ENCODE measurements at regions of chr18 and their contacts with region 1.

Region 1: GRCh38 chr18:51197661-51198424 is at the start of gene MEX3C:
- DNase-seq: peak; percentile 97 to 99 (median 99)
- ATAC-seq: peak; percentile 90
- H3K4me3 ChIP-seq: peak within 1 kb of the TSS; percentile 71
- H3K4me3 Mint-ChIP-seq: peak within 1 kb of the TSS; percentile 83 to 99 (median 97)
- H3K27ac ChIP-seq: peak within 1 kb of the TSS; percentile 80
- H3K27ac Mint-ChIP-seq: peak within 1 kb of the TSS; percentile 92 to 99 (median 97)
- H3K4me1 ChIP-seq: peaks cover 17% of the 10 kb centered on the region in 2 donors
- H3K4me1 Mint-ChIP-seq: peaks cover 20 to 35% (median 31%) of the 10 kb centered on the region in 7 donors
- H3K27me3 ChIP-seq: no peaks in the 10 kb centered on the region
- H3K27me3 Mint-ChIP-seq: no peaks in the 10 kb centered on the region
- total RNA-seq, gene MEX3C: 47.1 to 68.8 (median 53.7) TPM

Region 2: GRCh38 chr18:49486953-49487710 is 1710.7 kb before region 1 on chr18 and contains the start of gene C18orf32:
- CTCF ChIA-PET with region 1: no interaction called
- POLR2A ChIA-PET with region 1: no interaction called
- intact Hi-C with region 1: loop called in 1 of 2 experiments (anchors 5 kb)
- DNase-seq: peak; percentile 84 to 93 (median 92)
- ATAC-seq: peak; percentile 94
- H3K4me3 ChIP-seq: peak within 1 kb of the TSS; percentile 95
- H3K4me3 Mint-ChIP-seq: peak within 1 kb of the TSS; percentile 77 to 98 (median 94)
- H3K27ac ChIP-seq: peak within 1 kb of the TSS; percentile 95
- H3K27ac Mint-ChIP-seq: peak within 1 kb of the TSS; percentile 90 to 98 (median 96)
- H3K4me1 ChIP-seq: peaks cover 34 to 39% of the 10 kb centered on the region in 2 donors
- H3K4me1 Mint-ChIP-seq: peaks cover 40 to 83% (median 70%) of the 10 kb centered on the region in 7 donors
- H3K27me3 ChIP-seq: no peaks in the 10 kb centered on the region
- H3K27me3 Mint-ChIP-seq: no peaks in the 10 kb centered on the region
- total RNA-seq, gene C18orf32: 22.5 to 53.6 (median 31.5) TPM

Region 3: DNA sequence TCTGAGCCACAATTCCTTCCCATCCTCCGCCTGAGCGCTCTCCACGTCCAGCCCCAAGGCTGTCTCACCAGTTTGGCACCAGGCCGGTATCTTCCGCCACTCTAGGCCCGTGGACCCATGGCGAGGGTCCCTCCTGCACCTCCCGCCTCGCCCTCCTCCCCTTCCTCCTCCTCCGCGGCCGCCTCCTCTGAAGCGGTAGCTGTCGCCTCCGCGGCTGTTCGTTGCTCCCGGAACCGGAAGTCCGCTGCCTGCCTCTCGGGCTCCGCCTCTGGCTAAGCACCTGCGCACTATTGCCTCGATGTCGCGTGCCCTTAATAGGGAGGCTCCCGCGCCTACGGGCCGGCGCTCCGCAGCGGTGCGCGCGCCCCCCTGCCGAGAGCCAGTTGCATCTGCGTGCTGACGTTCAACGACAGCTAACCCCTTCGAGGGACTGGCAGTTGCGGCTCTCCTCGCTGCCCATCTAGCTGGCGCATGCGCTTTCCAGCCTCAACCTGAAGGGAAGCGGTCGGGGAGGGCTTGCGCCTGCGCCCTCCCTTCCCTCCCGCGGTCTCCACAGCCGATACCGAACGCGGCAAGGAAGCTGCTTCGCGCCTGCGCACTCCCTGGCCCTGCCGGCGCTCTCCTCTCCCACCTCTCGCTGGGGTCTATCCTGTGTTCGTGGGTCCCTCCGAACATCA is 916.4 kb before region 1 on chr18 and contains the start of gene MBD1:
- CTCF ChIA-PET with region 1: no interaction called
- POLR2A ChIA-PET with region 1: interaction called, 3 read pairs
- intact Hi-C with region 1: loop called in 1 of 2 experiments (anchors 2 kb)
- DNase-seq: peak; percentile 90 to 99 (median 97)
- ATAC-seq: peak; percentile 94
- H3K4me3 ChIP-seq: peak within 1 kb of the TSS; percentile 94
- H3K4me3 Mint-ChIP-seq: peak within 1 kb of the TSS; percentile 90 to 99 (median 97)
- H3K27ac ChIP-seq: peak within 1 kb of the TSS; percentile 88
- H3K27ac Mint-ChIP-seq: peak within 1 kb of the TSS; percentile 93 to 99 (median 97)
- H3K4me1 ChIP-seq: peaks cover 21 to 33% of the 10 kb centered on the region in 2 donors
- H3K4me1 Mint-ChIP-seq: peaks cover 24 to 53% (median 45%) of the 10 kb centered on the region in 7 donors
- H3K27me3 ChIP-seq: no peaks in the 10 kb centered on the region
- H3K27me3 Mint-ChIP-seq: peaks cover 0 to 2% (median 0%) of the 10 kb centered on the region in 5 donors
- total RNA-seq, gene MBD1: 97.5 to 158 (median 118) TPM

Region 4: DNA sequence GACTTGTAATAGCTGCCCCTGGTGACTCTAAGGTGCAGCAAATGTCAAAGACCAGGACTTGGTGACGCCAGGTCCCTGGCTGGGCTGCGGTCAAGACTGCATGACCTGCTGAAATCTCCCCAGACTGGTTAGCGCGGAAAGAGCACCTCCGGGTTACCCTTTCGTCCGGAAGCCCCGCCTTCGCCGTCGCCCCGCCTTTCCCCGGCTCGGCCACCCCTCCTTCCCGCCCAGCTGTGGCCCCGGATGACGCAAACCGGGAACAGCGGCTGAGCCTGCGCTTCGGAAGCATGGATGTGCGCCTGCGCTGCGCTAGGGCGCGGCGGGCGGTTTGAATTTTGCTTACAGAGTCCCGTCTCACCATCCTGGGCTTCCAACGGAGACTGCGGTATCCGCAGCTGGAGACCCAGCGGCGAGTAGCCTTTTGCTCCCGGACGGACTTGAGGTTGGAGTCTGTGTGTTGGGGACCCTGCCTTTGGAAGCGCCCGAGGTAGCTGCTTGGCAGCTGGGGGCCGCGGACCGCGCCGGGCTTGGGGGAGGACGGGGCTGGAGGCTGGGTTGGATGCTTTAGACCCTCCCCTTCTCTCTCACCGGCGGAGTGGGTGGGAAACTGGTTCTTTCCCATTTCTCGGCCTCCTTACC is 823.0 kb before region 1 on chr18 and contains the start of gene SKA1:
- CTCF ChIA-PET with region 1: no interaction called
- POLR2A ChIA-PET with region 1: no interaction called
- intact Hi-C with region 1: loop called in 1 of 2 experiments (anchors 10 kb)
- DNase-seq: peak; percentile 85 to 92 (median 89)
- ATAC-seq: peak; percentile 99
- H3K4me3 ChIP-seq: peak within 1 kb of the TSS; percentile 62
- H3K4me3 Mint-ChIP-seq: peak within 1 kb of the TSS; percentile 75 to 90 (median 80)
- H3K27ac ChIP-seq: peak within 1 kb of the TSS; percentile 71
- H3K27ac Mint-ChIP-seq: peak within 1 kb of the TSS; percentile 72 to 91 (median 87)
- H3K4me1 ChIP-seq: peaks cover 0 to 13% of the 10 kb centered on the region in 2 donors
- H3K4me1 Mint-ChIP-seq: peaks cover 0 to 34% (median 14%) of the 10 kb centered on the region in 7 donors
- H3K27me3 ChIP-seq: peaks cover 0 to 6% of the 10 kb centered on the region in 2 donors
- H3K27me3 Mint-ChIP-seq: peaks cover 0 to 8% (median 7%) of the 10 kb centered on the region in 5 donors
- total RNA-seq, gene SKA1: 0.27 to 24.8 (median 0.43) TPM

Region 5: GRCh38 chr18:50967714-50968661 is 229.9 kb before region 1 on chr18 and contains the start of gene ELAC1:
- CTCF ChIA-PET with region 1: no interaction called
- POLR2A ChIA-PET with region 1: interaction called, 4 read pairs
- intact Hi-C with region 1: loop called (anchors 1 kb)
- DNase-seq: peak; percentile 48 to 75 (median 65)
- ATAC-seq: peak; percentile 93
- H3K4me3 ChIP-seq: peak within 1 kb of the TSS; percentile 80
- H3K4me3 Mint-ChIP-seq: peak within 1 kb of the TSS; percentile 86 to 98 (median 94)
- H3K27ac ChIP-seq: peak within 1 kb of the TSS; percentile 90
- H3K27ac Mint-ChIP-seq: peak within 1 kb of the TSS; percentile 77 to 95 (median 92)
- H3K4me1 ChIP-seq: peaks cover 8 to 13% of the 10 kb centered on the region in 2 donors
- H3K4me1 Mint-ChIP-seq: peaks cover 15 to 35% (median 29%) of the 10 kb centered on the region in 7 donors
- H3K27me3 ChIP-seq: no peaks in the 10 kb centered on the region
- H3K27me3 Mint-ChIP-seq: no peaks in the 10 kb centered on the region
- total RNA-seq, gene ELAC1: 4.3 to 11.2 (median 6.3) TPM

Region 6: GRCh38 chr18:51135795-51136194 is 62.0 kb before region 1 on chr18:
- CTCF ChIA-PET with region 1: no interaction called
- POLR2A ChIA-PET with region 1: no interaction called
- intact Hi-C with region 1: loop called in 1 of 2 experiments (anchors 1 kb)
- DNase-seq: peak in 4 of 9 donors; percentile 7 to 25 (median 16)
- ATAC-seq: peak; percentile 55
- H3K4me3 ChIP-seq: no peak overlapping the region
- H3K4me3 Mint-ChIP-seq: no peak overlapping the region
- H3K27ac ChIP-seq: no peak overlapping the region
- H3K27ac Mint-ChIP-seq: no peak overlapping the region
- H3K4me1 ChIP-seq: no peaks in the 10 kb centered on the region
- H3K4me1 Mint-ChIP-seq: no peaks in the 10 kb centered on the region
- H3K27me3 ChIP-seq: no peaks in the 10 kb centered on the region
- H3K27me3 Mint-ChIP-seq: no peaks in the 10 kb centered on the region

Region 7: DNA sequence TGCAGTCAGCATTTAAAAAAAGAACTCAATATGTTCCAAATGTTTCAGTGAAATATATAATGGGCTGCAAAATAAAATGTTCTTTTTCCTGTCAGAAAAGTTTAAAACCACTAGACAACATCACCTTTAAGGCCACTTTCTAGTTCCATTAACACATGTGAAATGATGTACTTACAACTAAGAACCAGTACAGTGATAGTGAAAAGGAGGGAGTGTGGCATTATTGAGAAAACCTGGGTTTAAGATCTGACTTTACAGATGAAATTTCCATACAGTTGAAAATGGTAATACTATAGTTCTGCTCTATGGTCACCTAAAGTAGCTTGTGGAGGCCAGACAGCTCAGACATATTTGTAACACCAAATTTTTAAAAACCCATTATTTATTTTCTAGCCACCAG is 15.0 kb before region 1 on chr18:
- CTCF ChIA-PET with region 1: no interaction called
- POLR2A ChIA-PET with region 1: interaction called, 16 read pairs
- intact Hi-C with region 1: loop called in 1 of 2 experiments (anchors 1 kb)
- DNase-seq: no peak
- ATAC-seq: no peak
- H3K4me3 ChIP-seq: no peak overlapping the region
- H3K4me3 Mint-ChIP-seq: no peak overlapping the region
- H3K27ac ChIP-seq: no peak overlapping the region
- H3K27ac Mint-ChIP-seq: peak overlapping the region in 2 of 9 donors; percentile 28 to 43
- H3K4me1 ChIP-seq: peaks cover 7 to 49% of the 10 kb centered on the region in 2 donors
- H3K4me1 Mint-ChIP-seq: peaks cover 30 to 83% (median 68%) of the 10 kb centered on the region in 7 donors
- H3K27me3 ChIP-seq: no peaks in the 10 kb centered on the region
- H3K27me3 Mint-ChIP-seq: no peaks in the 10 kb centered on the region

Region 8: GRCh38 chr18:51275712-51276476 is 78.1 kb after region 1 on chr18:
- CTCF ChIA-PET with region 1: no interaction called
- POLR2A ChIA-PET with region 1: no interaction called
- intact Hi-C with region 1: no loop called
- DNase-seq: no peak
- ATAC-seq: no peak
- H3K4me3 ChIP-seq: no peak overlapping the region
- H3K4me3 Mint-ChIP-seq: no peak overlapping the region
- H3K27ac ChIP-seq: no peak overlapping the region
- H3K27ac Mint-ChIP-seq: no peak overlapping the region
- H3K4me1 ChIP-seq: no peaks in the 10 kb centered on the region
- H3K4me1 Mint-ChIP-seq: peaks cover 0 to 1% (median 0%) of the 10 kb centered on the region in 7 donors
- H3K27me3 ChIP-seq: no peaks in the 10 kb centered on the region
- H3K27me3 Mint-ChIP-seq: peaks cover 0 to 4% (median 0%) of the 10 kb centered on the region in 5 donors